ENCODE measurements at regions of chrX and their contacts with region 1.

Region 1: GRCh38 chrX:107766470-107767150 is 9.0 kb downstream of the TSC22D3 start:
- DNase-seq: peak; percentile 61 to 88
- H3K4me3 ChIP-seq: peak overlapping the region; percentile 4; the same call in 1 of the 2 replicates
- H3K27ac ChIP-seq: peak overlapping the region; percentile 61
- H3K4me1 ChIP-seq: peaks cover 52% of the 10 kb centered on the region
- H3K27me3 ChIP-seq: no peaks in the 10 kb centered on the region
- CTCF ChIP-seq: no peak

Region 2: GRCh38 chrX:107701493-107702121 is 65.0 kb before region 1 on chrX:
- CTCF ChIA-PET with region 1: no interaction called
- POLR2A ChIA-PET with region 1: no interaction called
- intact Hi-C with region 1: no loop called
- DNase-seq: no peak
- H3K4me3 ChIP-seq: no peak overlapping the region
- H3K27ac ChIP-seq: no peak overlapping the region
- H3K4me1 ChIP-seq: peaks cover 18% of the 10 kb centered on the region
- H3K27me3 ChIP-seq: no peaks in the 10 kb centered on the region
- CTCF ChIP-seq: no peak

Region 3: DNA sequence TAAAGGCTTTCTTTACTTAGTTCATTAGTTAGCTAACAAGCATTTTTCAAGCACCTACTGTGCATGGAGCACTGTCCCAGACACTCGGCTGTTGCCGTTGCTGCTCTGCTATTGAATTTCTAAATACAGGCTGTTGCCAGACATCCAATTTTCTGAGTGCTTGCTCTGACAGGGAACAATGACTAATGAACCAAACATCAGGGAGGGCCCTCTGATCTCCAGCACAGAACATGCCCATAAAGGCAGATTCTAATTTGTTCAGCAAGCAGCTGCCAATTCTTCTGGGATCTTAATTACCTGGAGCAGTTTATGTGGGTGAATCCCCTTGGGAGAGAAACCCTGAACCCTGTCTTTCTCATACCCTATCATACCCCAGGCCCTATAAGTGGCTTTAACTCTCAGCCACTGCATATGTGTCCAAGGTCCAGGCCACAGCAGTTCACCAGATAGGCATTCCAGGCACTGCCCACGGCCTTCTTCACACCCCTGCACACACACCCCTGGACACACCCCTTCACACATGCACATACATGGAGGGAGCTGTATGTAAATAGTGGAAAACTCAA is 18.9 kb before region 1 on chrX:
- CTCF ChIA-PET with region 1: interaction called, 16 read pairs
- POLR2A ChIA-PET with region 1: no interaction called
- intact Hi-C with region 1: no loop called
- DNase-seq: peak; percentile 40 to 78
- H3K4me3 ChIP-seq: no peak overlapping the region
- H3K27ac ChIP-seq: no peak overlapping the region
- H3K4me1 ChIP-seq: peaks cover 22% of the 10 kb centered on the region
- H3K27me3 ChIP-seq: no peaks in the 10 kb centered on the region
- CTCF ChIP-seq: no peak

Region 4: DNA sequence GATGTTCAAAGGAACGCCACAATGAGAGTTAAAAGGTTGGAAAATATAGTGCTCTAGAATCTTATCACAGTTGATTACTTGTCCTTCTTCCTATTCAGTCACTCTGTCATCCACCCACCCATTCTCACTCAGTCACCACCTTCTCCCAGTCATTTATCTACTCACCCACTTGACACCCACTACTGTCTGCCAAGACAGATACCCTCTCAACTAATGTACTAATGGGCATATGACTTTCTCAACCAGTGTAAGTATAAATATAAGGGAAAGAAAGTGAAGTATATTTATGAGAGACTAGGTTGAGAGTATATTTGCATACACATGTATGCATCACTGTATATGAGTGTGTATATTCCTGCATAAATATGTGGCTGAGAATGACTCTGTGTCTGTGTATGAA is 79.0 kb after region 1 on chrX:
- CTCF ChIA-PET with region 1: no interaction called
- POLR2A ChIA-PET with region 1: no interaction called
- intact Hi-C with region 1: no loop called
- DNase-seq: no peak
- H3K4me3 ChIP-seq: no peak overlapping the region
- H3K27ac ChIP-seq: no peak overlapping the region
- H3K4me1 ChIP-seq: peaks cover 7% of the 10 kb centered on the region; the same call in 1 of the 2 replicates
- H3K27me3 ChIP-seq: no peaks in the 10 kb centered on the region
- CTCF ChIP-seq: no peak

Region 5: DNA sequence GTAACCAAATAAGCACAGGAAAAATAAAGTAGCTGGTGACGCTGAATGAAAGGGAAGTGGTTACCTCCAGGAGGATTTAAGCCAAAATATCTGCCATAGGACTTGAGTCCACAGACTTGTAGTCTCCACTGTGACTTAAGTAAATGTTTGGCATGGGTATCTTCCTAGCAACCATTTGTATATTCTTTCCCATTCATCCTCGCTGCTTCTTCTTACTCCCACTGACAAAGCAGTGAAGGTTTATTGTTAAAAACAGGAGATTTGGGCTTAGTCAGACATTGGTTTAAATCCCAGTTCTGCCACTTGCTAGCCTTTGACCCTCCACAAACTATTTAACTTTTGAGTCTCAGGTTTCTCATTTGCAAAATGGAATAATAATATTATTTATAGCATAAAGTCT is 649.3 kb after region 1 on chrX:
- CTCF ChIA-PET with region 1: no interaction called
- POLR2A ChIA-PET with region 1: no interaction called
- intact Hi-C with region 1: no loop called
- DNase-seq: no peak
- H3K4me3 ChIP-seq: no peak overlapping the region
- H3K27ac ChIP-seq: no peak overlapping the region
- H3K4me1 ChIP-seq: no peaks in the 10 kb centered on the region
- H3K27me3 ChIP-seq: no peaks in the 10 kb centered on the region
- CTCF ChIP-seq: no peak